Prostate gland (tissue), 2 donors: ENCODE measurements at regions of chr9 and their contacts with region 1.

Region 1: DNA sequence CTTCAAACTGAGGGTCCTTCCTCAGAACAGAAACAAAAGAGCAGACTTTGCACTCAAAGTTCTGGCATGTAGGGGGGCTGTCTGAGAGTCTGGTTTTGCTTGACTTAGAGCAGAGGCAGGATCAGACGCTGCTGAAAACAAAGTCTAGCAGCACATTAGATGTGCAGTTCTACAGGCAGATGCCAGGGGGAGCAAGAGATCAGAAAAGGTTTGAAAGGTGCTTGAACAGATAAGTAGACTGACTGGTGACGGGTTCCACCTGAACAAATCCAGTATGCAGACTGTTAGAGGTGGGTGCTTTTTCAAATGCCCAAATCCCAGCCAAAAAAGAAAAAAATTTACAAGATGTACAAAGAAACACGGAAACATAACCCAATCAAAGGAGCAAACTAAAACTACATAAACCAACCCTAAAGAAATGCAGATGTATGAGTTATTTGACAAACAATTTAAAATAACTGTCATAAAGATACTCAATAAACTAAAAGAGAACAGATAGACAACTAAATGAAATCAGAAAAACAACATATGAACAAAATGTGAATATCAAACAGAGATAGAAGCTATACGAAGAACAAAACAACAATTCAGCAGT is 194.7 kb upstream of the FREM1 start:
- DNase-seq: peak; percentile 5
- H3K4me3 ChIP-seq: no peak overlapping the region
- H3K27ac ChIP-seq: no peak overlapping the region
- H3K4me1 ChIP-seq: no peaks in the 10 kb centered on the region
- H3K27me3 ChIP-seq: no peaks in the 10 kb centered on the region
- CTCF ChIP-seq: peak in 3 of 4 experiments; percentile 39 to 54 (median 46)
- POLR2A ChIP-seq: no peak

Region 2: DNA sequence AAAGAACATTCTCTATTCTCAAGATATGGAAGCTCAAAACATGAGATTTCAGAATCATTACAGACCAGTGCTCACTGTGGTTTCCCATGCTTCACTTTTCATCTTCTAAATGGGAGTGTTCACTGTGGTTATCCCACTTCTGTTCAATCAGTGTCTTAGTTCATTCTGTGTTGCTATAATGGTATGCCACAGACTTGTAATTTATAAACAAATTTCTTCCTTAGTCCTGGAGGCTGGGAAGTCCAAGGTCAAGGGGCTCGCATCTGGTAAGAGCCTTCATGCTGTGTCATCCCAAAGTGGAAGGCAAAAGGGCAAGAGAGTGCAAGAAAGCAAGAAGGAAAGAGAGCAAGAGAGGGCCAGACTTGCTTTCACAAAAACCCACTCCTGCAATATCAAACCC is 55.8 kb after region 1 on chr9:
- intact Hi-C with region 1: loop called (anchors 10 kb)
- DNase-seq: no peak
- H3K4me3 ChIP-seq: no peak overlapping the region
- H3K27ac ChIP-seq: no peak overlapping the region
- H3K4me1 ChIP-seq: no peaks in the 10 kb centered on the region
- H3K27me3 ChIP-seq: no peaks in the 10 kb centered on the region
- CTCF ChIP-seq: no peak
- POLR2A ChIP-seq: no peak

Region 3: GRCh38 chr9:15182101-15182551 is 77.2 kb after region 1 on chr9:
- intact Hi-C with region 1: no loop called
- DNase-seq: no peak
- H3K4me3 ChIP-seq: no peak overlapping the region
- H3K27ac ChIP-seq: no peak overlapping the region
- H3K4me1 ChIP-seq: no peaks in the 10 kb centered on the region
- H3K27me3 ChIP-seq: no peaks in the 10 kb centered on the region
- CTCF ChIP-seq: no peak
- POLR2A ChIP-seq: no peak

Region 4: DNA sequence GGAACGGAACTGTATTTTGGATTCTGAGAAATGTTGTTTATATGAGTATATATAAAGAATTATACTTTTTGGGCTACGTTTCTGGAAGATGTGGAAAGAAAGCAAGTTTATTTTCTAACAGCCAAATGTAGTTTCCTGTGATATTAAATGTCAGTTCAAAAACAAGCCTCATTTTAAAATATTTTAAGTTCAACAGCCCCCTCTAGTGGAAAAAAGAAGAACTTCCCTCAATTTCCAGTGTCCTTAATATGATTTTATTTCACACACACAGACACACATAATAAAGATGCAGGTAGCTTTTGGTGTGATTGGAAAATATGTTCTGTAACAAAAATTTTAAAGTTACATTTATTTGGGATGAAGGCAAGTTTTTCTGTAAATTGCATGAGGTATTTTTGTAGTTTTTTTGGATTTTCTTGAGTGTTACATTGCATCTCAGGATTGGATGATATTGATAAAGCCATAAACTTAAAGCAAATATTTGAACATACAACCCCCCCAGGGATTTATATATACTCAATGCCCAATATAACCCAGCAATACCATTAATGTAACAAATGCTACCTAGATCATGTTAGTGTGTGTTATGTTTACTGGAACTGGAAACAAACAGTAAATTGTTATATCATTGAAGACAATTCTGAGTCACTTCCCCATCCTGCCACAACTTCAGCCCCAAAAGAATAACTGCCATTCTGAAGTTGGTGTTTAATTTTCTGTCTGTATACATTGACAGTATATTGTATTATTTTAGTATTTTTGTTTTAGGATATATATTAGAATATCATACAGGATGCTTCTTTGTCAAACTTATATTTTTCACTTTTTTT is 501.9 kb after region 1 on chr9:
- intact Hi-C with region 1: loop called (anchors 10 kb)
- DNase-seq: peak; percentile 25
- H3K4me3 ChIP-seq: no peak overlapping the region
- H3K27ac ChIP-seq: no peak overlapping the region
- H3K4me1 ChIP-seq: no peaks in the 10 kb centered on the region
- H3K27me3 ChIP-seq: no peaks in the 10 kb centered on the region
- CTCF ChIP-seq: peak; percentile 73 to 84 (median 76)
- POLR2A ChIP-seq: no peak